H1 (cell line): ENCODE measurements at regions of chr14 and their contacts with region 1.

Region 1: DNA sequence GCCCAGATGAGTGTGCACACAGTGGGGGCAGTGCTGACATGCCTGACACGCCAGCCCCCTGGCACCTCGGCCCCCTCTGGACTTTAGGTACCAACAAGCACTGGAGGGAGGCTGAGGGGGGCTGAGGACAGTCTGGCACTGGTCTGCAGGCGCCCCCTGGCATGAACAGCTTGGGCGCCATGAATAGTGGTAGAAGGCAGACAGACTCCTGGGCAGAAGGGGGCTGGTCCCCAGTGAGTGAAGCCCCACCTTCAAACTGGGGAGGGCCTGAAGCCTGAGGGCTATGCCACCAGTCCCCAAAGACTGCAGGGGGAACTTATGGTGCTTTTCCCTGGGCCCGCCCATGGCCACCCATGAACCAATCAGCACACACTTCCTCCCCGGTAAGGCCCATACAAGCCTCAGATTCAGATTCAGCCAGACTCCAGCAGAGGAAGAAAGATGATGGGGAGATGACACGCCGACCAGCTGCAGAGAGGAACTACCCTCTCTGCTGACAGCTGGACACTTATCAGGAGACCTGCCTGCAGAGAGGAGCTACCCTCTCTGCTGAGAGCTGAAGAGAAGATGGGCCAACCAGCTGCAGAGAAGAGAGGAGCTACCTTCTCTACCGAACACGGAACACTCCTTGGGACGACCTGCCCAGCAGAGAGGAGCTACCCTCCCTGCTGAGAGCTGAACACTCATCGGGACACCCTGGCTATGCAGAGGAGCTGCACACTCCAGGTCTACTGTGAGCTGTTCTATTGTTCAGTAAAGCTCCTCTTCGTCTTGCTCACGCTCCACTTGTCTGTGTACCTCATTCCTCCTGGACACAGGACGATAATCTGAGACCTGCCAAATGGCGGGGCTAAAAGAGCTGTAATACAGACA is 324.5 kb downstream of the PCNX1 start:
- DNase-seq: peak in 1 of 2 experiments; percentile 47
- H3K4me3 ChIP-seq: no peak overlapping the region
- H3K27ac ChIP-seq: no peak overlapping the region
- H3K4me1 ChIP-seq: no peaks in the 10 kb centered on the region; a peak in 1 of 7 replicates
- H3K27me3 ChIP-seq: no peaks in the 10 kb centered on the region
- CTCF ChIP-seq: peak in 1 of 3 experiments; percentile 1; a peak in 1 of 4 replicates
- EP300 ChIP-seq: no peak
- POLR2A ChIP-seq: no peak
- RAD21 ChIP-seq: no peak; a peak in 1 of 4 replicates

Region 2: DNA sequence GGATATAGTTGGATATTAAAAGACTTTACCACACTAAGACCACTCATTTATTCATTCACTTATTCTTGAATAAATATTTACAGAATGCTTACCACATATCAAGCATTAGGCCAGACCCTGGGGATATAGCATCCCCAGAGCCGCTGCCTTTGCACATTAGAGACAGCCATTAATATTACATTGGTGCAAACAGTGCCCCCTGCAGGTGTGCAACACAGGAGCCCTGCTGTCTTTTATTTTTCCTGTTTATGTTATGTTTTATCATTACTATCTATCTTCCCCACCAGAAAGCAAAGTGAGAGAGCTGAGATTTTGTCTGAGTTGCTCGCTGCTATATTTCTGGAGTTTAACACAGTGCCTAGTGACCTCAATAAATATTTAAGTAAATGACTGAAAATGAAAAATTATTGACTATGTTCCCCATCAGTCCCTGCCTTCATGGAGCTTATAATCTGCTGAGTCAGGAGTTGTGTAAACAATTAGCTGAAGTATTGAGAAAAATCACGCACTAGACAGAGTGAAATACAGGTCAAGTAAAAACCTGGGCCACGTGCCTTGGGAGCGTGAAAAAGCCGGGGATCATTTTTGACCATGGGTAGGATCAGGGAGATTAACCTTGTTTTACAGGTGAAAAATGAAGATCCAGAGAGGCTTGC is 22.9 kb before region 1 on chr14:
- CTCF ChIA-PET with region 1: interaction called, 12 read pairs
- POLR2A ChIA-PET with region 1: no interaction called
- DNase-seq: no peak
- H3K4me3 ChIP-seq: no peak overlapping the region
- H3K27ac ChIP-seq: no peak overlapping the region
- H3K4me1 ChIP-seq: peaks cover 0 to 3% (median under 1%) of the 10 kb centered on the region in 4 experiments; a peak in 3 of 7 replicates
- H3K27me3 ChIP-seq: no peaks in the 10 kb centered on the region
- CTCF ChIP-seq: peak in 2 of 3 experiments; percentile 18 to 22; a peak in 1 of 4 replicates
- EP300 ChIP-seq: no peak
- POLR2A ChIP-seq: no peak
- RAD21 ChIP-seq: no peak